ENCODE measurements at regions of chr9 and their contacts with region 1.

Region 1: DNA sequence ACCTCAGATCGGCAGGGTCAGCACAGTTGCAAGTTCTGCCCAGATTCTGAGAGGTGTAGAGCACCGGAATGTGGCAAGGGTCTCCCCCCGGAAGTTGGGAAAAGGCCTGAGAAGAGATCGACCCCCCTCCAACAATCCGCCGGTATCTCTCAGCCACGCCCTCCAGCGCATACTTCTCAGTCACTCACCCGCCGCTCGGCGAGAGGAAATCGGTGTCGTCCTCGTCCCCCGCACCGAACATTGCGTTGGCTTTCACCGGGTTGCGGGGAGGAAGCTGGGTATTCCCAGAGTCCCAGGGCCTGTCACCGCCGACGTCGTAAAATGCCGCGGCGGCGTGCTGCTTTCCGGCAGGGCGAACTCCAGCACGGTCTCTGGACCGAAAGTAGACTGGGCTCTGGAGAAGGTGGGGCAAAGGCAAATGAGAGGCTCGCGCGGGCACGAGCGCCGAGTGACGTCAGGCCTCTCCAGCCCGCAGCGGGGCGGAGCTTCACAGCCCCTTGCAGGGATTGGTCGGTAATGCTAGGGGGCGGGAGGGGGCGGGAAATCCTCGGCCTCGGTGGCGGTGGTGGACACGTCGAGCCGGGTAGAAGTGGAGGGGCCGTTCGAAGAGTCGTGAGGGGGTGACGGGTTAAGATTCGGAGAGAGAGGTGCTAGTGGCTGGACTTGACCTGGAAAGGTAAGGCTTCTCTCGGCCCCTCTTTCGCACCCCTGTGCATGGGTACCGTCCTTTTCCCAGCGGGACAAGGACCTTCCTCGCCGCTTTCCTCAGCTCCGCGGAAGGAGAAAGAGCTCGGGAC is at the starts of genes FKBP15 and SLC31A1:
- DNase-seq: peak; percentile 99
- H3K4me3 Mint-ChIP-seq: peak within 1 kb of the TSS; percentile 94
- H3K27ac Mint-ChIP-seq: peak within 1 kb of the TSS; percentile 94
- H3K4me1 Mint-ChIP-seq: peaks cover 53% of the 10 kb centered on the region
- H3K27me3 Mint-ChIP-seq: no peaks in the 10 kb centered on the region
- total RNA-seq, gene FKBP15: 33.9 and 36.7 TPM in 2 replicates
- total RNA-seq, gene SLC31A1: 18.6 and 20.0 TPM in 2 replicates

Region 2: DNA sequence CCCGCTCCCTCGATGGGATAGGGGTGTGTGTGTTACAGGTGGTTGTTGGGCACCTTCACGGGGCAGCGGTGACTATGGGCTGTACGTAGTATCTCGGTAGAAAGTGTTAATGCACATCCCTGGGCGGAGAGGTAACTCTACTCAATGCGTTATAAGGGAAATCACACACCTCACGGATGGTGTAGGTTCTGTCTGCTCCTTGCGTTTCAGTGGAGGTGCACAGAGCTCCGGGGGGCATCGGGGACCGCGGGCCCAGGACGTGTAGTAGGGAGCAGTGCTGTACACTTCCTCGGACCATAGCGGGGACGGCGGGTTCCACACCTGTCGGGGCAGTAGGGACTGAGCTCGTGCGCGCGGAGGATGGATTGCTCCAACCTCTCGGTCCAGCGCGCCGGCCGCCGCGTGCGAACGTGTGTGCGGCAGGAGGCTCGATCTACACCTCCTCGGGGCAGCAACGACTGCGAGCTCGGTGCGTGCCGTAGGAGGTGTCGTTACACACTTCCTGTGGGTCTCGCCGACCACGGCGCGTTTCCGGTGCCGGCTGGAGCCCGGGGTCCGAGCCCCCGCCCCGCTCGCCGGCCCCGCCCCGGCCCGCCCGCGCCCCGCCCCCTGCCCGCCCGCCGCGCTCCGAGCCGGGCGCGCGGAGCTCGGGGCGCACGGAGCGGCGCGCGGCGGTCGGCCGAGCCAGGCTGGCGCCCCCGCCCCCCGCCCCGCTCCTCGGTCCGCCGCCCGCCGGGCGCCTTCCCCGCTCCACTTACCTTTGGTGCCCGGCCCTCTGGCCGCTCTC is 734.8 kb before region 1 on chr9 and contains the start of gene KIAA1958:
- intact Hi-C with region 1: loop called (anchors 10 kb)
- DNase-seq: peak; percentile 96
- H3K4me3 Mint-ChIP-seq: peak within 1 kb of the TSS; percentile 98
- H3K27ac Mint-ChIP-seq: peak within 1 kb of the TSS; percentile 98
- H3K4me1 Mint-ChIP-seq: peaks cover 28% of the 10 kb centered on the region
- H3K27me3 Mint-ChIP-seq: peaks cover 3% of the 10 kb centered on the region
- total RNA-seq, gene KIAA1958: 9.8 and 10.6 TPM in 2 replicates

Region 3: DNA sequence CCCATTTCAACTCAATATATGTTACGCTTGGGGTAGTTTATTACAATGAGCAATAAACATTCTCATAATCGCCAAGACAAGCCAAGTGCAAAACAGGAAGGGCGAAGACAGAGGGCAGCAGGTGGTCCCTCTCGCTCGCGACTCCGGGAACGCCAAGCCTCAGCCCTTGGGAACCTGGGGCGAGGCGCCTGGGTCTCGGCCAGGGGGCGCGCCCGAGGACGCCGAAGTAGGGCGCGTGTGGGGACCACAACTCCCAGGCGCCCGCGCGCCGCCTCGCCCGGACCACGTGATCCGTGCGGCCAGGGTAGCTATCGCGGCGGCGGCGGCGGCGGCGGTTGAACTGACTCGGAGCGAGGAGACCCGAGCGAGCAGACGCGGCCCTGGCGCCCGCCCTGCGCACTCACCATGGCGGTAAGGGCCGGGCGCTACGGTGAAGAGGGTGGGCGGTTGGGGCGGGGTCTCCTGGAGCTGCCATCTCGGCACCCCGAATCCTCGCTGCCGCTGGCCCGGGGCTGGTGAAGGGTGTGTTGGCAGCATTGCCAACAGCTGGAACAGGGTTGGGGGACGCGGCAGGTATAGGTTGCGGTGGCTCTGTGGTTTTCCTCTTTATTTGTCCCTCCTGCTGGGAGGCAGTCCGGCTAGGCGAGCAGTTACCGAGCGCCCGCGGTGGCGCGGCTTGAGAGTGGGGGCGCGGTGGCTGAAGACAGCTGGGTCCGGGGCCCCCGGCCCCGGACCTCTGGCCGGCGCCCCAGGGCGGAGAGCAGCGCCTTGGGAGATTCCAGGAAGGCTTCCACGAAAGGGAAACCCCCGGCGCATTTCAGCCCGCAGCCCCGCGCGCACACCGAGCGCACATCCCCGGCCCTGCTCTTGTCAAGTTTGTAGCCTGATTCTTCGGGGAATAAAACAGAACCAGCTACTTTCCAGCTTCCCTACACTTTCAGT is 70.3 kb before region 1 on chr9 and contains the start of gene SLC31A2:
- intact Hi-C with region 1: loop called (anchors 1 kb)
- DNase-seq: peak; percentile 97
- H3K4me3 Mint-ChIP-seq: peak within 1 kb of the TSS; percentile 84
- H3K27ac Mint-ChIP-seq: peak within 1 kb of the TSS; percentile 80
- H3K4me1 Mint-ChIP-seq: peaks cover 28% of the 10 kb centered on the region
- H3K27me3 Mint-ChIP-seq: peaks cover 2% of the 10 kb centered on the region
- total RNA-seq, gene SLC31A2: 4.5 and 5.3 TPM in 2 replicates

Region 4: GRCh38 chr9:113281356-113281755 is 60.2 kb after region 1 on chr9:
- intact Hi-C with region 1: no loop called
- DNase-seq: no peak
- H3K4me3 Mint-ChIP-seq: no peak overlapping the region
- H3K27ac Mint-ChIP-seq: no peak overlapping the region
- H3K4me1 Mint-ChIP-seq: peaks cover 25% of the 10 kb centered on the region
- H3K27me3 Mint-ChIP-seq: no peaks in the 10 kb centered on the region

Region 5: DNA sequence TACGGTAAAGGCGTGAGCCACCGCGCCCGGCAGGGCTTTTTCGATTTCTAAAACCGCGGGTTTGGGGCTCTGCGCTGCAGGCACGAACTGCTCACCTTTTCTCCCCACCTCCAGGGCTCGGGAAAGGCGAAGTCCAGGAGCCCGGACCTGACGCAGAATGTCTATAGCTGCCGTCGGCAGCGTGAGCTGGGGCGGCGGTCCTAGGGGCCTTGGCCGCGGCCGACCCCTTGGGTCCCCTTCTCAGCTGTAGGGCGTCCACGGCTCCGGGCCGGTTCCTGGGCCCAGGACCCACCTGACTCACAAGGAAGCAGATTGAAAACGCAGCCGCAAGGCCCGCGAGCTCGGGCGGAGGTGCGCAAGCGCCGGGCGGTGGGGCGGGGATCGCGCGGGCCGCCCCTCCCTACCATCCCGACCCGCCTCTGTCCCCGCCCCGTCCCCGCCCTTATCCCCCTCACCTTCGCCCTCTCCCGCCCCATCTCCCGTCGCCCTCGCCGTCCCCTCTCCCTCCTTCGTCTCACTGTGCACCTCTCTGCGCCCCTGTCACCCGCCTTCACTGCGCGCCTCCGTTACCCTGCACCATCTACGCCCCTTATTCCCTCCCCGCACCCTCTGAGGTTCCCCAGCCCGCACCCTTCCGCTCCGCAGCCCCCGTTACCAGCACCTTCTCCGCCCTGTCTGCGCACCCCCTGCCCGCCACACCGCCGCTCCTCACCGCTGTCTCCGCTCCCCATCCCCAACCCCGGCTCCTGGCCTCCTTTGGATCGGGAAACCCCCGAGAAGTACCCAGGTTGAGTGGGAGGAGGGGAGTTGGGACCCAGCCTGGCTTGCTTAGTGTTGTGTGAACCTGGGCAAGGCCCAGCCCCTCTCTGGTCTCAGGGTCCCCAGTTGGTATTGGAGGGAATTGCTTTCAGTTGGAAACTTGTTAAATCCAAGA is 155.7 kb after region 1 on chr9 and contains the start of gene HDHD3:
- intact Hi-C with region 1: loop called (anchors 1 kb)
- DNase-seq: peak; percentile 95
- H3K4me3 Mint-ChIP-seq: peak within 1 kb of the TSS; percentile 92
- H3K27ac Mint-ChIP-seq: peak within 1 kb of the TSS; percentile 83
- H3K4me1 Mint-ChIP-seq: peaks cover 15% of the 10 kb centered on the region
- H3K27me3 Mint-ChIP-seq: no peaks in the 10 kb centered on the region
- total RNA-seq, gene HDHD3: 16.5 and 17.8 TPM in 2 replicates

Region 6: DNA sequence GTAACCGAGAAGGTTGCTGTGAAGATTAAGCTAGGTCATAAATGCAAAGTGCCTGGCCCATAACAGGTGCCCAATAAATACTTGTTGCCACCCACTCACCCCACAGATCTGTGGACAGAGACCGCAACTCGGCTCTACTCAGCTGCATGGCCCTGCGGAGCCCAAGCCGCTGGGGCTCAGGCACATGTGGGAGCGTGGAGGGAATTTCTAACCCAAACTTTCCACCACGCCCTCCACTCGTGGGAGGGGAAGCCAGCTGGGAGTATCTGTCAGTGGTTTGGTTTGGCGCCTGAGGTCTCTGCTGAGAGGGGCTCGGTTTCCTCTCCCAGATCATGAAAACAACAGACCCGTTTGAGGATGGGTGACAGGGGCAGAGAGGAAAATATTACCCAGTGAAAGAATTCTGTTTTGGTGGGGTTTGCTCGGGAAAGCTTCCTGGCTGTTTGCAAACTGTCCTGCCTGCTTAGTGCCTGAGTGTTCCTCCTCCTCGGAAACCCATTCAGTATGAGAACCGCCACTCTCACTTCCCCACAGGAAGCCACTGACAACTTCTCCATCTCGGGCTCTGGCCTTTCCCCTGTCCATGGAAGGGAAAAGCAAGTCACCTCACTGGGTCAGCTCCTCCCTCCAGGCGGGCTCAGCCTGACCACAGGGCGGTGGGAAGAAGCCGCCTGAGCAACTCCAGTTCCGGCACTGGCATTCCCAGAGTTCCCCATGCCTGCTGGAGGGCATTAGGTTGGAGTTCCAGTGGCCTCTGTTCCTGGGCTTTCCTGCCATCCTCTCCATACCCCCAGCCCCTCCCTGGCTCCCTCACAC is 302.4 kb after region 1 on chr9:
- intact Hi-C with region 1: loop called (anchors 1 kb)
- DNase-seq: peak; percentile 84
- H3K4me3 Mint-ChIP-seq: peak overlapping the region; percentile 79
- H3K27ac Mint-ChIP-seq: peak overlapping the region; percentile 81
- H3K4me1 Mint-ChIP-seq: peaks cover 72% of the 10 kb centered on the region
- H3K27me3 Mint-ChIP-seq: no peaks in the 10 kb centered on the region